Activated naive CD4-positive, alpha-beta T cell treated with anti-CD3 and anti-CD28 coated beads, Interleukin-2, amount 10 ng/mL, durations not matched to agents 7 days and 5 days (primary cell): ENCODE measurements at regions of chr13 and their contacts with region 1.

Region 1: GRCh38 chr13:42354241-42355091 is 82.5 kb downstream of the AKAP11 start:
- DNase-seq: peak; percentile 61
- H3K4me3 Mint-ChIP-seq: peak overlapping the region; percentile 24
- H3K27ac Mint-ChIP-seq: peak overlapping the region; percentile 92
- H3K4me1 Mint-ChIP-seq: peaks cover 43% of the 10 kb centered on the region
- H3K27me3 Mint-ChIP-seq: peaks cover 3% of the 10 kb centered on the region

Region 2: DNA sequence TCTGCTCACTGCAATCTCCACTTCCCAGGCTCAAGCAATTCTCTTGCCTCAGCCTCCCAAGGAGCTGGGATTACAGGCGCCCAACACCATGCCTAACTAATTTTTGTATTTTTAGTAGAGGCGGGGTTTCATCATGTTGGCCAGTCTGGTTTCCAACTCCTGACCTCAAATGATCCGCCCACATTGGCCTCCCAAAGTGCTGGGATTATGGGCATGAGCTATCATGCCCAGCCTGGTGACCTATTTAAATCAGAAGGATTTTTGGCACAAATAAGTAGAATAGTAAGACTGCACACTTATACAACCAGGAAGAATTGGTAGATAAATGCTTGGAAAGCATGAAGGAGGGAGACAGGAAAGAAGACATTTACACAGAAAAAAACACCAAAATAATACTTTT is 135.9 kb before region 1 on chr13:
- CTCF ChIA-PET with region 1: no interaction called
- DNase-seq: no peak
- H3K4me3 Mint-ChIP-seq: no peak overlapping the region
- H3K27ac Mint-ChIP-seq: no peak overlapping the region
- H3K4me1 Mint-ChIP-seq: no peaks in the 10 kb centered on the region
- H3K27me3 Mint-ChIP-seq: no peaks in the 10 kb centered on the region

Region 3: GRCh38 chr13:42478531-42479156 is 124.2 kb after region 1 on chr13:
- CTCF ChIA-PET with region 1: interaction called, 10 read pairs
- DNase-seq: peak; percentile 20
- H3K4me3 Mint-ChIP-seq: no peak overlapping the region
- H3K27ac Mint-ChIP-seq: no peak overlapping the region
- H3K4me1 Mint-ChIP-seq: peaks cover 7% of the 10 kb centered on the region
- H3K27me3 Mint-ChIP-seq: peaks cover 4% of the 10 kb centered on the region